Activated CD8-positive, alpha-beta T cell treated with anti-CD3 and anti-CD28 coated beads, Interleukin-2, amount 10 ng/mL, durations not matched to agents 7 days and 5 days (primary cell): ENCODE measurements at regions of chr4 and their contacts with region 1.

Region 1: DNA sequence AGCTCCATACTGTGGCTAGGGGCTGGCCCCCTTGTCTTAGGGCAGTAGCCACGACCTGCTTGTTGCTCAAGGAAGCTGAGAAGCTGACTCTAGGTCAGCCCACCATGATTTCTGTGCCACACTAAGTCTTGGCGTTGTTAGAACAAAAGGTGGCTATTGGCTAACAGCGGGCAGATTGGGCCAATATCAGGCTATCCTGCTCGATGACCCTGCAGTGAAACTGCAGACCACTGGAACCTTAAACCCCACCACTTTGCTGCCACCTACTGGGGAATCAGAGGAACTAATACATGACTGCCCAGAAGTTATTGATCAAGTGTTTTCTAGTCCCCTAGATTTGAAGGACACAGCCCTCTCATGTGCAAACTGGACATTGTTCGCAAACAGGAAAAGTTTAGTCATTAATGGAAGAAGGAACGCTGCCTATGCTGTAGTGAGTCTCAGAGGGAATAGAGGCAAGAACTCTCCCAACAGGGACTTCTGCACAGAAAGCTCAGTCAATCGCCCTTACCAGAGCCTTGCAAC is 17.0 kb upstream of the PAPSS1 start:
- DNase-seq: peak; percentile 57
- ATAC-seq: peak; percentile 57
- H3K4me3 Mint-ChIP-seq: no peak overlapping the region
- H3K27ac Mint-ChIP-seq: no peak overlapping the region
- H3K4me1 Mint-ChIP-seq: no peaks in the 10 kb centered on the region
- H3K27me3 Mint-ChIP-seq: peaks cover 1% of the 10 kb centered on the region

Region 2: DNA sequence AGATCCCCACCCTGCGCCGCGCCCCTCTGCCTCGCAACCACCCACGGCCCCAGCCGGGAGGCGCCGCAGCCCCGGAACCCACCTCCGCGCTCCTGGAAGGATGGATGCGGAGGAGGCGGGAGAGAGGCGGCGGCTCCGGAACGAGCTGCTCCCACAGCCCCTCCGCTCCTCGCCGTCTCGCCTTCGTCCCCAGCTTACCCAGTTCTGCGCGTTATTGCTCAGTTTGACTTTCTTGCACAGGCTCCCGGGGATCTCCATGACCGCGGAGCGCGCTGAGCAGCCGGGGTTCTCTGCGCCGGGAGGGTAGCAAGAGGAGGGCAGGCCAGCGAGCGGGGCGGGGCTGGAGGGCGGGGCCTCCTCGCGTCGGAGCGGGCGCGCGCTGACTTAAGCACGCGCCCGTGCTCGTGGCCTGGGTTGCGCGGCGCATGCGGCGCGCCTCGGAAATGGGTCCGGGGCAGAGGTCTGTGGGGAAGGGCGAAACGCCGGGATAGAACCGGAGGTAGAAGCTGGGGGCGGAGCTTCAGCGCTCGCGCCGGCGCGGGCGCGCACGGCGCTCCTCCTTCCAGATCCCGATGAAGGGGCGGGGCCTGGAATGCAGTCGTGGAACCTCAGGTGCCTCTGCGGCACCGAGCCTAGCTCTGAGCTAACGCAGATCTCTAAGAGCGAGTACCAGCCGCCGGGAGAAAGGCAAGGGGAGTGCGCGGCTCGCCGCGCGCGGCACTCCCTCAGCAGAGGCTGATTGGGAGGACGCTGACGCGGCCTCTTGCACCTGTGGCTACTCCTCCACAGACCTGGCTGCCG is 16.9 kb before region 1 on chr4 and contains the start of gene PAPSS1:
- CTCF ChIA-PET with region 1: interaction called, 20 read pairs
- POLR2A ChIA-PET with region 1: no interaction called
- DNase-seq: peak; percentile 94
- ATAC-seq: peak; percentile 91
- H3K4me3 Mint-ChIP-seq: peak within 1 kb of the TSS; percentile 87
- H3K27ac Mint-ChIP-seq: peak within 1 kb of the TSS; percentile 93
- H3K4me1 Mint-ChIP-seq: peaks cover 28% of the 10 kb centered on the region
- H3K27me3 Mint-ChIP-seq: no peaks in the 10 kb centered on the region
- total RNA-seq, gene PAPSS1: 20.5 to 20.8 TPM

Region 3: DNA sequence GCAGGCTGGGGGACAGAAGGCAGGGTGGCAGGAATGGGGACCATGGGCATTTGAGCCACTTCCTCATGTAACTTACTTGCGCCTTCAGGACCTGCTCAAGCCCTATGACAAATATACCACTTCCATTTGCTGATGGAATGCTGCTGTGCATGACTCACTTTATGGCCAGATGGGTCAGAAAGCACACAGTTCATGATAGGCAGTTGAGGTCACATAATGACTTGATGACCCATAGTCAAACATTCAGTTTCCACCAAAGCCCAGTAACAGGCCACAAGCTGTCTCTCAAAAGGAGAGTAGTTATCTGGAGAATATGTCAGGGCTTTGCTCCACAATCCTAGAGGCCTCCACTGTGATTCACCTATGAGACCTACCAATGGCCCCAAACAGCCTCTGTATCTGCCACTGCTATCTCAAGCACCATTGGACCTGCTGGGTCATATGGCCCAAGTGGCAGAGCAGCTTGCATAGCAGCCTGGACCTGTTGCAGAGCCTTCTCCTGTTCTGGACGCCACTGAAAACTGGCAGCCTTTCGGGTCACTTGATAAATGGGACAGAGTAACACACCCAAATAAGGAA is 11.6 kb before region 1 on chr4:
- CTCF ChIA-PET with region 1: interaction called, 20 read pairs
- POLR2A ChIA-PET with region 1: no interaction called
- DNase-seq: no peak
- ATAC-seq: no peak
- H3K4me3 Mint-ChIP-seq: no peak overlapping the region
- H3K27ac Mint-ChIP-seq: no peak overlapping the region
- H3K4me1 Mint-ChIP-seq: peaks cover 12% of the 10 kb centered on the region
- H3K27me3 Mint-ChIP-seq: no peaks in the 10 kb centered on the region